ENCODE measurements at regions of chr3 and their contacts with region 1.

Region 1: GRCh38 chr3:188262913-188263683 is 109.1 kb downstream of the LPP start:
- DNase-seq: peak; percentile 96
- ATAC-seq: peak; percentile 71
- H3K4me3 ChIP-seq: peak overlapping the region; percentile 46
- H3K27ac ChIP-seq: peak overlapping the region; percentile 96
- H3K4me1 ChIP-seq: peaks cover 75% of the 10 kb centered on the region
- H3K27me3 ChIP-seq: no peaks in the 10 kb centered on the region
- CTCF ChIP-seq: no peak

Region 2: DNA sequence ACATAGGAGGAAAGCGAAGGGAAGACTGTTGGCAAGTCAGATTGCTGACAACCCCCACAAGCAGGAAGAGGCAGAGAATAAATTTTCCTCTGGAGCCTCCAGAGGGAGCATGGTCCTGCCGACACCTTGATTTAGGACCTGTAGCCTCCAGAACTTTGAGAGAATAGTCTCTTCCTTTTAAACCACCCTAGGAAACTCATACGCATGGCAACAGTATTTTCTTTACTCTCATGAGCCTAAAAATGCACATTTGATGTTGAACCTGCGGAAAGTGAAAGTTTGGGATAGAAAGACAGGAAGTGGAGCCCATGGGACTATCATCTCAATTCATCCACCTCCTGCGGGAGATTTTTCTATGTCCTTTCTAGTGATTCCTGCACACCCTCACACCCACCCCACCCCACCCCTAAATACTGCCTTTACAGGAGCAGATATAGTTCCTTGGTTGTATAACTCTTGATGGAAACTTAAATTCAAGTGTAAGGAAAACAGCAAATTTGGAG is 225.8 kb before region 1 on chr3:
- CTCF ChIA-PET with region 1: no interaction called
- POLR2A ChIA-PET with region 1: no interaction called
- intact Hi-C with region 1: loop called (anchors 1 kb)
- DNase-seq: peak; percentile 65
- ATAC-seq: peak; percentile 90
- H3K4me3 ChIP-seq: no peak overlapping the region
- H3K27ac ChIP-seq: no peak overlapping the region
- H3K4me1 ChIP-seq: peaks cover 16% of the 10 kb centered on the region
- H3K27me3 ChIP-seq: no peaks in the 10 kb centered on the region
- CTCF ChIP-seq: peak; percentile 69

Region 3: DNA sequence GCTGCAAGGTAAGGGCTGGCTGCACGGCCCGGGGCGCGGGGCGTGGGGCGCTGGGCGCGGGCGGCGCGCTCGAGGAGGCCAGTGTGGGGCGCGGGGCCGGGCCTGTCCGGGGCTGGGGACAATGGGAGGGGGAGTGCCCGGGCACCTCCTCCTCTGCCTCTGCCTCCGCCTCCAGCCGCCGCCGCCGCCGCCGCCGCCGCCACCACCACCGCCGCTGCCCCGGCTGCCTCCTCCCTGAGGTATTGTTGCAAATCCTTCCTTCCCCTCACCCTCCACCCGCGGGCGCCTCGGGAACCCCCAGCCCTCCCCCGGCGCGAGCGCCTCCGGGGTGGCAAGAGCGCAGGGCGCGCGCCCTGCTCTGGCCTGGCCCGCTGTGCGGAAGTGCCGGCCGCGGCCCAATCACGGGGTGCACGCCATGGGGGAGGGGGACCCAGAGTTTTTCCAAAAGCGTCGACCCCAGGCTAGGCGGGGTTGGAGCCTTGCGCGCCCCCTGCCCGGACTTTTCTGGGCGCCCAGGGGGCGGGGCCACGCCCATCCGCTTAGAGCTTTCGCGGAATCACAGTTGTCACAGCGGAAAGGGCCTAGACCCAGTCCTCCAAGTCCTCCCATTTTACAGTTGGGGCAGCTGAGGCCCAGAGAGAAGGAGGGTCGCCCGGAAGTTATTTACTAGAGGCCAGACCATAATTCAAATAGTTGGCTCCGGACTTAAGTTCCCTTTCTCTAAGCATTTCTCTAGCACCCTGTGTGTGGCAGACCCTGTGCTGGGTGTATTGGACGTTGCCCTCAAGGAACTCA is 108.9 kb before region 1 on chr3 and contains the start of gene LPP:
- CTCF ChIA-PET with region 1: interaction called, 4 read pairs
- POLR2A ChIA-PET with region 1: interaction called, 6 read pairs
- intact Hi-C with region 1: loop called (anchors 2 kb)
- DNase-seq: peak; percentile 58
- ATAC-seq: peak; percentile 82
- H3K4me3 ChIP-seq: peak within 1 kb of the TSS; percentile 97
- H3K27ac ChIP-seq: peak within 1 kb of the TSS; percentile 88
- H3K4me1 ChIP-seq: peaks cover 29% of the 10 kb centered on the region
- H3K27me3 ChIP-seq: no peaks in the 10 kb centered on the region
- CTCF ChIP-seq: 0 out of 2 replicates have a peak, but pooled peaks have one; percentile 14
- total RNA-seq, gene LPP: 20.4 and 21.3 TPM in 2 replicates

Region 4: GRCh38 chr3:188244395-188244861 is 18.7 kb before region 1 on chr3:
- CTCF ChIA-PET with region 1: no interaction called
- POLR2A ChIA-PET with region 1: no interaction called
- intact Hi-C with region 1: loop called (anchors 1 kb)
- DNase-seq: peak; percentile 92
- ATAC-seq: peak; percentile 93
- H3K4me3 ChIP-seq: 0 out of 2 replicates have a peak overlapping the region, but pooled peaks have one; percentile 2
- H3K27ac ChIP-seq: peak overlapping the region; percentile 85
- H3K4me1 ChIP-seq: peaks cover 34% of the 10 kb centered on the region
- H3K27me3 ChIP-seq: no peaks in the 10 kb centered on the region
- CTCF ChIP-seq: no peak